H1 (cell line): ENCODE measurements at regions of chr17 and their contacts with region 1.

Region 1: GRCh38 chr17:46193626-46194392 is 580 bp upstream of the KANSL1 start:
- DNase-seq: peak; percentile 80 to 96
- H3K4me3 ChIP-seq: peak overlapping the region; percentile 73 to 99 (median 86)
- H3K27ac ChIP-seq: peak overlapping the region; percentile 94
- H3K4me1 ChIP-seq: peaks cover 6 to 16% (median 10%) of the 10 kb centered on the region in 4 experiments; a peak in 5 of 7 replicates
- H3K27me3 ChIP-seq: no peaks in the 10 kb centered on the region
- CTCF ChIP-seq: 0 out of 4 replicates have a peak, but pooled peaks of 1 of the 3 experiments have one; percentile 8
- EP300 ChIP-seq: peak in 1 of 2 experiments; percentile 31; a peak in 1 of 3 replicates
- POLR2A ChIP-seq: peak; percentile 77 to 88
- RAD21 ChIP-seq: no peak

Region 2: DNA sequence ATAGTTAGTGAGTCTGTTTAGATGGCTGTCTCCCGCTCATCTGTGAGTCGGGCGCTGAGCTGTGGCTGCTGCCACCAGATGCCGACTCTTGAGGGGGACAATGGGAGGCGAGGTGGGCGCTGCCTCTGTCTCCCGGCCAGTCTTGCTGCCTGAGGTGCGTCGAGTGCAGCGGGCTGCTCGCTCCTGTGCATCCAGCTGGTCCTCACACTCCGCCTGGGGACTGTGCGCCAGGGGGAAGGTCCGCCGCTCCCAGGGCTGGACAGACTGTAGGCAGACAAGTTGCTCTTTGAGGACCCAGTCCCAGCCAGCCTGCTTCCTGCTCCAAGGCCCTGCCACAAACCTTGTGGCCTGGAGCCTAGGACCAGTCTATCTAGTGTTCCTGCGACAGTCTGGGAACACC is 162.4 kb before region 1 on chr17:
- CTCF ChIA-PET with region 1: no interaction called
- POLR2A ChIA-PET with region 1: no interaction called
- DNase-seq: no peak
- H3K4me3 ChIP-seq: no peak overlapping the region
- H3K27ac ChIP-seq: no peak overlapping the region
- H3K4me1 ChIP-seq: peaks cover 3 to 19% (median 6%) of the 10 kb centered on the region in 4 experiments
- H3K27me3 ChIP-seq: no peaks in the 10 kb centered on the region
- CTCF ChIP-seq: no peak
- EP300 ChIP-seq: no peak
- POLR2A ChIP-seq: no peak
- RAD21 ChIP-seq: no peak

Region 3: GRCh38 chr17:46179375-46179999 is 14.3 kb before region 1 on chr17:
- CTCF ChIA-PET with region 1: interaction called, 6 read pairs
- POLR2A ChIA-PET with region 1: interaction called, 208 read pairs
- DNase-seq: no peak
- H3K4me3 ChIP-seq: no peak overlapping the region; a peak in 1 of 8 replicates
- H3K27ac ChIP-seq: peak overlapping the region; percentile 43; the same call in 1 of the 2 replicates
- H3K4me1 ChIP-seq: peaks cover 13 to 41% (median 31%) of the 10 kb centered on the region in 4 experiments
- H3K27me3 ChIP-seq: no peaks in the 10 kb centered on the region
- CTCF ChIP-seq: no peak
- EP300 ChIP-seq: no peak
- POLR2A ChIP-seq: no peak; a peak in 1 of 3 replicates
- RAD21 ChIP-seq: no peak

Region 4: GRCh38 chr17:46205975-46206374 is 12.2 kb after region 1 on chr17:
- CTCF ChIA-PET with region 1: interaction called, 84 read pairs
- POLR2A ChIA-PET with region 1: interaction called, 14 read pairs
- DNase-seq: no peak
- H3K4me3 ChIP-seq: no peak overlapping the region
- H3K27ac ChIP-seq: no peak overlapping the region
- H3K4me1 ChIP-seq: no peaks in the 10 kb centered on the region
- H3K27me3 ChIP-seq: no peaks in the 10 kb centered on the region
- CTCF ChIP-seq: no peak
- EP300 ChIP-seq: no peak
- POLR2A ChIP-seq: no peak
- RAD21 ChIP-seq: no peak

Region 5: DNA sequence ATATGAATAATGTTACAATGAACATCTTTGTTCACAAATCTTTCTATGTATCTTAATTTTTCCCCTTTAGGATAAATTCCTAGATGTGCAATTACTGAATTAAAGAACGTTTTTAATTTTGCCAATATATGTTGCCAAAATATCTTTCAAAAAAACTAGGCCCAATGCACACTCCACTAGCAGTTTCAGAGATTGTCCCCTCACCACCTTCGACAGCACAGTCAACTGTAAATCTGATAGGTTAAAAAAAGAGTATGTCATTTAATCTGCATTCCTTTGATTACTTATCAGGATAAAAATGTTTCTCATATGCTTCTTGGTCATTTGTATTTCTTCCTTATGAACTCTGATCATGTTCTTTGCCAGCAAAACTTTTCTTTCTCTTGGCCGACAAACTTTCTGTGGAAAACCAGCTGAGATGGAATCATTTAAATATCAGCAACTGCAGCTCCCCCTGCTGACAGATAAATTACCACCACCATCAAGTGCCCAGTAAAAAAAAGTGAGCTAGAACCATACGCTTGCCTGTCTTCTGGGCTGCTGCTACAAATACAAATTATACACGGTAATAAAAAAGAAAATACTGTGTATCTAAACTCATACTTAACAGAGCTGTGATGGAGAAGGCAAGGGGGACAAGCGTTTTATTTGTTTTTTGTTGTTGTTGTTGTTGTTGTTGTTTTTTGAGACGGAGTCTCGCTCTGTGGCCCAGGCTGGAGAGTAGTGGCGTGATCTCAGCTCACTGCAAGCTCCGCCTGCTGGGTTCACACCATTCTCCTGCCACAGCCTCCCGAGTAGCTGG is 19.0 kb after region 1 on chr17:
- CTCF ChIA-PET with region 1: interaction called, 84 read pairs
- POLR2A ChIA-PET with region 1: interaction called, 10 read pairs
- DNase-seq: no peak
- H3K4me3 ChIP-seq: no peak overlapping the region
- H3K27ac ChIP-seq: no peak overlapping the region
- H3K4me1 ChIP-seq: no peaks in the 10 kb centered on the region
- H3K27me3 ChIP-seq: no peaks in the 10 kb centered on the region
- CTCF ChIP-seq: peak in 2 of 3 experiments; percentile 88 to 89; a peak in 3 of 4 replicates
- EP300 ChIP-seq: no peak
- POLR2A ChIP-seq: no peak
- RAD21 ChIP-seq: peak; percentile 75 to 79